Heart right ventricle (tissue), 16 donors: ENCODE measurements at regions of chr19 and their contacts with region 1.

Region 1: GRCh38 chr19:31890218-31890617 is 455.2 kb upstream of the ZNF507 start:
- DNase-seq: no peak
- ATAC-seq: no peak
- H3K4me3 ChIP-seq: no peak overlapping the region
- H3K27ac ChIP-seq: no peak overlapping the region
- H3K4me1 ChIP-seq: peaks cover 0 to 3% (median 0%) of the 10 kb centered on the region in 9 donors
- H3K27me3 ChIP-seq: peaks cover 0 to 4% (median 0%) of the 10 kb centered on the region in 7 donors
- CTCF ChIP-seq: no peak

Region 2: DNA sequence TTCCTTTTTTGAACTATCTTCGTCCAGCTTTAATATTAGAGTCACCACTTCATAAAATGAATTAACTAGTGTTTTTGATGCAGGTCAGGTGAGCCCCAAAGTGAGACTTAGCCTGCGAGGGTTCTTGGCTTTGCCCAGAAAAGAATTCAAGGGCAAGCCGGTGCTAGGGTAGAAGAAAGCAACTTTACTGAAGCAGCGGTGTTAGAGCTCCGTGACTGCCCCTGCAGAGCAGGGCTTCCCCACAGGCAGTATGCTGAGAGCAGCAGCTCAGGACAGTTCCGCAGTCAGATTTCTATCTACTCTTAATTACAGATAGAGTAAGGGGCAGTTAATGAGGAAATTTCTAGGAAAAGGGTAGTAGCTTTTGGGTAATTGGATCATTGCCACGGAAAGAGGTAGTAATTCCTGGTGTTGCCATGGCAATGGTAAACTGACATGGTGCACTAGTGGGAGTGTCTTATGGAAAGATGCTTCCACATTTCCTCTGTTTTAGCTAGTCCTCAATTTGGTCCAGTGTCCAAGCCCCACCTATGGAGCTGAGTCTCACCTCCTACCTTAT is 23.0 kb after region 1 on chr19:
- intact Hi-C with region 1: loop called in 1 of 10 experiments (anchors 1 kb)
- DNase-seq: no peak
- ATAC-seq: no peak
- H3K4me3 ChIP-seq: no peak overlapping the region
- H3K27ac ChIP-seq: no peak overlapping the region
- H3K4me1 ChIP-seq: peaks cover 0 to 5% (median 0%) of the 10 kb centered on the region in 9 donors
- H3K27me3 ChIP-seq: no peaks in the 10 kb centered on the region
- CTCF ChIP-seq: no peak